Panc1 (cell line): ENCODE measurements at regions of chr9 and their contacts with region 1.

Region 1: GRCh38 chr9:78267889-78268288 is 29.0 kb upstream of the PSAT1 start:
- DNase-seq: no peak
- ATAC-seq: no peak
- H3K4me3 ChIP-seq: no peak overlapping the region
- H3K27ac ChIP-seq: no peak overlapping the region
- H3K4me1 ChIP-seq: no peaks in the 10 kb centered on the region
- H3K27me3 ChIP-seq: no peaks in the 10 kb centered on the region
- CTCF ChIP-seq: no peak

Region 2: DNA sequence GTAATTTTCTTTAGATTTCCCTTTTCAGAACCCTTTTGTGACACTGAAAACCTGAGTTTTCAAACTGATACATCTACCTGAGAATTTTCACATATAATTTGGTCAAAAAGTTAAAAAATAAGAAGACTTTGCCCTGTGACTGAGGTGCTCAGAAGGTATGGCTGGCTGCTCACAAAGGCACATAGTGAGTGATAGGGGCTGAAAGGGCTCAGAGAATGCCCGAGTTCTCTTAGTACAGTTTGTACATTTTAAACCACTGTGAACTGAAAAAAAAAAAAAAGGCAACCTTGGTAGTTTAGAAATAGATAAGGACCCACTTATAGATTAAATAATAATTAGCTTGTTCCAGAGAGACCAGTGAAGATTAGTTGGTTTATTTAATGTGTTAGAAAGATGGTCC is 10.9 kb after region 1 on chr9:
- CTCF ChIA-PET with region 1: no interaction called
- POLR2A ChIA-PET with region 1: interaction called, 10 read pairs
- in situ Hi-C with region 1: no loop called
- intact Hi-C with region 1: no loop called
- DNase-seq: no peak
- ATAC-seq: no peak
- H3K4me3 ChIP-seq: no peak overlapping the region
- H3K27ac ChIP-seq: no peak overlapping the region
- H3K4me1 ChIP-seq: no peaks in the 10 kb centered on the region
- H3K27me3 ChIP-seq: no peaks in the 10 kb centered on the region
- CTCF ChIP-seq: no peak